CD14-positive monocyte (primary cell): ENCODE measurements at regions of chr16 and their contacts with region 1.

Region 1: DNA sequence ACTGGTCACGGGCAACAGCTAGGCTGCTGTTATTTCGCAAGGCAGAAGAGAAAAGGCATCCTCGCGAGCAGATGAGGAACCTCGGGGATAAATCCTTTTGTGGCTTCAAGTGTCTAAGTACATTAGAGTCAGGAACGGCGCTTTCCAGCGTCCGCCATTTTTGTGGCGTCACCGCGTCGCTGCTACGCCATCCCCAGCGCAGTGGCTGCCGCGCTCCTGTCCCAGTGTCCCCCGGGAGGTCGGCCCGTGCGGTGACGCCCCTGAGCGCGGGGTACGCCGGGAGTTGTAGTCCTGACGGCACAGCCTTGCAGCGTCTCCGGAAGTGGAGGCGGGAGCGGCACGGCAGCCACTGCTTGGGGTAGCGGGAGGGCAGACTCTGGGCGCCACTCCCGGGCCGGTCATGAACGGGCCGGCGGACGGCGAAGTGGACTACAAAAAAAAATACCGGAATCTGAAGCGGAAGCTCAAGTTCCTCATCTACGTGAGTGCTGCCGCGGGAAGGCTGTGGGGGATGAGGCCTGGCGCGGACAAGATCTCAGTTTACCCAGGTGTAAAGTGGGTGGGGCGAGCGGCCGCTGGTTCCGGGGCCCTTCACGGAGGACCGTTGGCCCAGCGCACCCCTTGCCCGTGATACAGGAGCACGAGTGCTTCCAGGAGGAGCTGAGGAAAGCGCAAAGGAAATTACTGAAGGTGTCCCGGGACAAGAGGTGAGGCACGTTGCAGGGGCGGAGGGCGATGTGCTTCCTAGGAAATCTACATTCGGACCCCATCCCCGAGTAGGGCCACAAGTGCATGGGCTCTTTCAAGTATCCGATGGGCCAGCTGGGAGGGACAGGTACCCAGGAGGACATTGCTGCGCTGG is at the start of gene INO80E:
- DNase-seq: peak; percentile 94 to 96 (median 96)
- H3K4me3 ChIP-seq: peak within 1 kb of the TSS; percentile 79 to 100 (median 100)
- H3K4me3 Mint-ChIP-seq: peak within 1 kb of the TSS; percentile 91 to 98
- H3K27ac ChIP-seq: peak within 1 kb of the TSS; percentile 86 to 94
- H3K27ac Mint-ChIP-seq: peak within 1 kb of the TSS; percentile 92 to 98 (median 97)
- H3K4me1 ChIP-seq: peaks cover 18 to 31% of the 10 kb centered on the region in 2 donors
- H3K4me1 Mint-ChIP-seq: peaks cover 23% of the 10 kb centered on the region
- H3K27me3 ChIP-seq: no peaks in the 10 kb centered on the region
- H3K27me3 Mint-ChIP-seq: peaks cover 0 to 5% (median 0%) of the 10 kb centered on the region in 3 donors
- CTCF ChIP-seq: no peak
- polyA plus RNA-seq, gene INO80E: 2.8 to 57.6 (median 3.5) TPM

Region 2: GRCh38 chr16:29815793-29816693 is 180.1 kb before region 1 on chr16 and contains the start of gene PAGR1:
- intact Hi-C with region 1: loop called in 1 of 2 experiments (anchors 10 kb)
- DNase-seq: peak; percentile 99
- H3K4me3 ChIP-seq: peak within 1 kb of the TSS; percentile 64 to 88 (median 74)
- H3K4me3 Mint-ChIP-seq: peak within 1 kb of the TSS; percentile 95 to 96
- H3K27ac ChIP-seq: peak within 1 kb of the TSS; percentile 73 to 83
- H3K27ac Mint-ChIP-seq: peak within 1 kb of the TSS; percentile 91 to 98 (median 96)
- H3K4me1 ChIP-seq: peaks cover 54 to 75% of the 10 kb centered on the region in 2 donors
- H3K4me1 Mint-ChIP-seq: peaks cover 67% of the 10 kb centered on the region
- H3K27me3 ChIP-seq: peaks cover 5 to 24% of the 10 kb centered on the region in 2 donors
- H3K27me3 Mint-ChIP-seq: peaks cover 21 to 32% (median 31%) of the 10 kb centered on the region in 3 donors
- CTCF ChIP-seq: peak; percentile 92
- polyA plus RNA-seq, gene PAGR1: 12.6 to 43.4 (median 36.3) TPM

Region 3: GRCh38 chr16:29973384-29974246 is 22.5 kb before region 1 on chr16 and contains the start of gene TAOK2:
- intact Hi-C with region 1: loop called (anchors 1 kb)
- DNase-seq: peak; percentile 97 to 99 (median 98)
- H3K4me3 ChIP-seq: peak within 1 kb of the TSS; percentile 79 to 100 (median 98)
- H3K4me3 Mint-ChIP-seq: peak within 1 kb of the TSS; percentile 91 to 94
- H3K27ac ChIP-seq: peak within 1 kb of the TSS; percentile 63 to 77
- H3K27ac Mint-ChIP-seq: peak within 1 kb of the TSS; percentile 82 to 96 (median 93)
- H3K4me1 ChIP-seq: peaks cover 31 to 43% of the 10 kb centered on the region in 2 donors
- H3K4me1 Mint-ChIP-seq: peaks cover 38% of the 10 kb centered on the region
- H3K27me3 ChIP-seq: no peaks in the 10 kb centered on the region
- H3K27me3 Mint-ChIP-seq: peaks cover 0 to 5% (median 2%) of the 10 kb centered on the region in 3 donors
- CTCF ChIP-seq: no peak
- polyA plus RNA-seq, gene TAOK2: 1.1 to 19.2 (median 2.3) TPM

Region 4: DNA sequence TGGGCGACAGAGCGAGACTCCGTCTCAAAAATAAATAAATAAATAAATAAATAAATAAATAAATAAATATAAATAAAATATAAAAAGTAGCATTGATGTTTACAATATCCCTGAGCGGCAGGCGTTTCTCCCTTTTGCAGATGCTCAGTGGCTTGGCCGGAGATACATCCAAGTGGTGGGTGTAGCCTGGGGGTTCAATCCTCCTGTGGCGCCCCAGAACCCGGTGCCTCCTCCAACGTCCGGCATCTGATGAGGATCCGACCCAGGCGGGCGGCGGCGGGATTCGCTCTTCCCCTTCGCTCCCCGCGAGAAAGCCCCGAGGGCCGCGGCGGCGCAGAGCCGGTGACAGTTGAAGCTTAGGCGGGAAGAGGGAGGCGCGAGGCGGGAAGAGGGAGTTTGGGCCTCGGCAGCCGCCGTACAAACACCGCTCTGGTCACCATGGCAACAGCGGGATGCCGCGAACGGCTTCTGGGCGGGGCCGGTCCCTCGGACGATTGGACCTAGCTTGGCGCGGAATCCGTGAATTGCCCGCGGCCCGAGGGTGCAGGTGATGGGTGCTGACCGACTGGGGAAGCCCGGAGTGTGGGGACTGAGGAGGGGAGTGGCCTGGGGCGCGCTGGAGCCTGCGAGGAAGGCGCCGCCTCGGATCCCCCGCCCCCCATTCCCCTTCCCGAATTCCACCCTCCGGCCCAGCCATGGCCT is 56.7 kb after region 1 on chr16:
- intact Hi-C with region 1: no loop called
- DNase-seq: peak; percentile 87 to 91 (median 88)
- H3K4me3 ChIP-seq: peak overlapping the region; percentile 49 to 81 (median 57)
- H3K4me3 Mint-ChIP-seq: peak overlapping the region; percentile 71 to 86
- H3K27ac ChIP-seq: peak overlapping the region in 1 of 2 donors; percentile 49
- H3K27ac Mint-ChIP-seq: peak overlapping the region in 5 of 7 donors; percentile 40 to 61 (median 50)
- H3K4me1 ChIP-seq: peaks cover 11 to 18% of the 10 kb centered on the region in 2 donors
- H3K4me1 Mint-ChIP-seq: peaks cover 18% of the 10 kb centered on the region
- H3K27me3 ChIP-seq: no peaks in the 10 kb centered on the region
- H3K27me3 Mint-ChIP-seq: peaks cover 0 to 1% (median 0%) of the 10 kb centered on the region in 3 donors
- CTCF ChIP-seq: no peak